ENCODE measurements at regions of chr10 and their contacts with region 1.

Region 1: GRCh38 chr10:123132576-123133477 is 2.9 kb upstream of the HMX3 start:
- DNase-seq: peak; percentile 89
- H3K4me3 ChIP-seq: peak overlapping the region; percentile 39 to 57
- H3K27ac ChIP-seq: no peak overlapping the region
- H3K4me1 ChIP-seq: peaks cover 0 to 8% of the 10 kb centered on the region in 2 experiments; a peak in 2 of 4 replicates
- H3K27me3 ChIP-seq: peaks cover 65% of the 10 kb centered on the region
- CTCF ChIP-seq: peak; percentile 92
- EP300 ChIP-seq: no peak
- RAD21 ChIP-seq: peak; percentile 91

Region 2: GRCh38 chr10:123096452-123096851 is 36.4 kb before region 1 on chr10:
- CTCF ChIA-PET with region 1: interaction called, 10 read pairs
- POLR2A ChIA-PET with region 1: no interaction called
- DNase-seq: no peak
- H3K4me3 ChIP-seq: no peak overlapping the region
- H3K27ac ChIP-seq: no peak overlapping the region
- H3K4me1 ChIP-seq: no peaks in the 10 kb centered on the region
- H3K27me3 ChIP-seq: no peaks in the 10 kb centered on the region
- CTCF ChIP-seq: no peak
- EP300 ChIP-seq: no peak
- RAD21 ChIP-seq: no peak

Region 3: GRCh38 chr10:123147635-123148413 is 15.0 kb after region 1 on chr10 and contains the start of gene HMX2:
- CTCF ChIA-PET with region 1: interaction called, 51 read pairs
- POLR2A ChIA-PET with region 1: no interaction called
- DNase-seq: peak; percentile 55
- H3K4me3 ChIP-seq: no peak within 1 kb of the TSS
- H3K27ac ChIP-seq: no peak within 1 kb of the TSS
- H3K4me1 ChIP-seq: peaks cover 0 to 23% of the 10 kb centered on the region in 2 experiments; a peak in 2 of 4 replicates
- H3K27me3 ChIP-seq: peaks cover 99% of the 10 kb centered on the region
- CTCF ChIP-seq: no peak
- EP300 ChIP-seq: no peak
- RAD21 ChIP-seq: no peak
- polyA plus RNA-seq, gene HMX2: not detected in 2 replicates

Region 4: DNA sequence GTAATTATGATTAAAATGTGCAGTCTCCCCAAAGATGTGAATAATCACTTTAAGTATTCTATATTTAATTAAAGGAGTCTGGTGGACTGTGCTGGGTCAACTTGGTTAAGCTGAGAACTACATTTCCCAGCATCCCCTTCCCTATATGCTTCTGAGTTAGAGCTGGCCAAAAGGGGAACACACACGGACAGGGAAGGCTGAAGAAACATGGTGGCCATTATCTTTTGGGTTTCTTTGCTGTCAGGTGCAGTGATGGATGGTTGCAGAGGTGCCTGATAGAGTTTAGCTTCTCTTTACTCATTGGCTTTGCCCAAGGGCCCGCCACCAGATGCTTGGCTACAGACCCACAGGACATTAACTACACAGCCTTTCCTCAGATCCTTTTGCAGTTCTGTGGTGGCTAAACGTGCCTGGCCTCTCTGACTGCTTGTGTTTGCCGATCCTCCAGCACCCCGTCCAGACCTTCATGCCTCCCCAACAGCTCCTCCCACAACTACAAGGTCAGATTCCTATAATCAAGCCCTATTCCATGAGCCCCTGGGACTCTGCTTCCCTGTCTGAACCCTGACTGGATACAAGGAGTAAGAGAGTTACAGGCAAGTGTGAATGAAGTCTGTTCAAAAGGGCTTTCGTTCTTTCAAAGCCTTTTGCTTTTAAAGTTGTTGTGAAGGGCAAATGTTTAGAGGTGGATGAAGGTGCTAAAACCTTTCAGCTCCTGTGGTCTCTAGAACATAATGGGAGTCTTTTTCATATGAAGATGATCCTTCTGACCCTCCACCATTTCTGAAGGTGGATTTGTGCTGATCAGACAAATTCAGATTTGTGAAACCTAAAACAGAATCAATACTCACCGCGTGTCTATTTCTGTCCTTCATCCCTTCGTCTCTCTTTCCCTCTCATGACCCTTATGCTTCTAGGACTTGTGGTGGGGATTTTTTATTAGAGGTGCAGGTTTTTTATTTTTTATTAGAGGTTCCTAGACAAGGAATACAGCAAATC is 42.9 kb after region 1 on chr10:
- CTCF ChIA-PET with region 1: no interaction called
- POLR2A ChIA-PET with region 1: no interaction called
- DNase-seq: no peak
- H3K4me3 ChIP-seq: no peak overlapping the region
- H3K27ac ChIP-seq: no peak overlapping the region
- H3K4me1 ChIP-seq: no peaks in the 10 kb centered on the region
- H3K27me3 ChIP-seq: no peaks in the 10 kb centered on the region
- CTCF ChIP-seq: no peak
- EP300 ChIP-seq: no peak
- RAD21 ChIP-seq: no peak

Region 5: DNA sequence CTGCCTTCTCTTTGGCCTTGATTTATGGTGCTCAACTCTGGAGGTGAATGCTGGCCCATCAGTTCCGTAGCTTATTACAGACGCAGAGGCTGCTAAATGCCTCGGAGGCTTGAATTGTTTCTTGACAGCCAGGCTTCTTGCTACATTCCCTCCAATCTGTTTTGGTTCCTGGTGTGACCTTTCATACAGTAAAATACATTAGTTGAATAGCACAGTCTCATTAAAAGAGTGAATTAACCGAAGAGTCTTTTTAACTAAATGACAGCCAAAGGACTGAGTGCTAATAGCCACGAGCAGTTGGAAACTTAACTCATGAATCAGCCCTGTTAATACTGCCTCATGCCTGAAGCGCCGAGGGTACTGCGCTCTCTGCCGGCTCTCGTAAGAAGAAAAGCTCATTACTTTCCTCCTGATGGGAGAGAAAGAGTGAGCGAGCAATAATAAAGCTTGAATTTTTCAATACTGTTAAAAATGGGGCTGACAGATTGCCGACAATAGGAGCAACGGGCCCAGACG is 296.9 kb after region 1 on chr10:
- CTCF ChIA-PET with region 1: interaction called, 28 read pairs
- POLR2A ChIA-PET with region 1: no interaction called
- DNase-seq: peak; percentile 48
- H3K4me3 ChIP-seq: no peak overlapping the region
- H3K27ac ChIP-seq: peak overlapping the region in 1 of 2 experiments; percentile 58; a peak in 1 of 4 replicates
- H3K4me1 ChIP-seq: peaks cover 0 to 18% of the 10 kb centered on the region in 2 experiments; a peak in 2 of 4 replicates
- H3K27me3 ChIP-seq: no peaks in the 10 kb centered on the region
- CTCF ChIP-seq: no peak
- EP300 ChIP-seq: no peak
- RAD21 ChIP-seq: peak; percentile 44; the same call in 1 of the 2 replicates

Region 6: DNA sequence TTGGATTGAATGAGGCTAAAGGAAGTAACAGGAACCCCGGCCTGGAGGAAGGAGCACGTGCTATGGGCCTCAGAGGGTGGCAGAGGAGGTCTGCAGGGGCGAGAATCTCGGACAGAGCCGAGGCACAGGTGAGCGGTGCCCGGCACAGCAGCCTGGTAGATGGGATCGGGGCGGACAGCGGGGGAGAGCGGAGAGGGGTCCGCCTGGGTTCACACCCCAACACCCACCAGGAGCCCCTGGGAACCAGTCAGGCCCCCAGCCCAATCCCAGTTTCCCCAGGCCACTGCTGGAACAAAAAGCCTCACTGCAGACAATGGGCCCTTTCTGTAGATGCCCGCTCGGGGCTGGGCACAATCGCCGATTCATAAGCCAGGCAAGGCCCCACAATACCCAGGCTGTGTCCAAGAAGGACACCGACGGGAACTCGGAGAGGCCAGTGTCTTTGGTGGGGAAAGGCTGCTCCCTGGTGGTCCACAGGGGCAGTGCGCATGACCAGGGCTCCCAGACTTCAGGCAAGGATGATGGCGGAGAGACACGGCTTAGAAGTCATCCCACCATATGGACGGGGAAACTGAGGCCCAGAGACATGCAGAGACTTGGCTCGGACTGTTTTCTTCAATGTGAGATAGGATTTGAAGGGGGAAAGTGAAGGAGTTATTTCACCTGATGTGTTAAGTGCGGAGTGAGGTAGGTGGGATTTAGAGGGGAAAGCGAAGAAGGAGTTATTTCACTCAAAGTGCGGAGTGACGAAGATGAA is 426.4 kb after region 1 on chr10:
- CTCF ChIA-PET with region 1: interaction called, 29 read pairs
- POLR2A ChIA-PET with region 1: no interaction called
- DNase-seq: peak; percentile 88
- H3K4me3 ChIP-seq: no peak overlapping the region
- H3K27ac ChIP-seq: no peak overlapping the region
- H3K4me1 ChIP-seq: no peaks in the 10 kb centered on the region
- H3K27me3 ChIP-seq: no peaks in the 10 kb centered on the region
- CTCF ChIP-seq: peak; percentile 88
- EP300 ChIP-seq: no peak
- RAD21 ChIP-seq: peak; percentile 94

Measured in SK-N-SH (cell line).